GM10248 (cell line): ENCODE measurements at regions of chr13 and their contacts with region 1.

Region 1: DNA sequence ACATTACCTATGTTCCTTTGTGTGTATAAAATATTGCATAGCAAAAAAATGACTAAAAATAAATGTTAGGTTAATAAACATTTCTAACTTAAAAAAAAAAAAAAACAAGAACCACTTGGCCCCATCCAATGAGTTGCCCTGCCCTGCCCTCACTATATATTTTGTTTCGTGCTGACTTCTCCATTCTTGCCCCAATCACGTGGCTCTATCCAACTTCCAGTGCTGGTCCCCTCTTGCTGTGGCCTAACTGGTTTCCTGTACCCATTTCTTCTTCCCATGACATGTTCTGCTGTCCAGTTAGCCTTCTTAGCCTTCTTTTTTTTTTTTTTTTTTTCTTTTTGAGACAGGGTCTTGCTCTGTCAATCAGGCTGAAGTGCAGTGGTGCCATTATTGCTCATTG is 151.6 kb downstream of the FOXO1 start:
- DNase-seq: no peak
- CTCF ChIP-seq: no peak

Region 2: DNA sequence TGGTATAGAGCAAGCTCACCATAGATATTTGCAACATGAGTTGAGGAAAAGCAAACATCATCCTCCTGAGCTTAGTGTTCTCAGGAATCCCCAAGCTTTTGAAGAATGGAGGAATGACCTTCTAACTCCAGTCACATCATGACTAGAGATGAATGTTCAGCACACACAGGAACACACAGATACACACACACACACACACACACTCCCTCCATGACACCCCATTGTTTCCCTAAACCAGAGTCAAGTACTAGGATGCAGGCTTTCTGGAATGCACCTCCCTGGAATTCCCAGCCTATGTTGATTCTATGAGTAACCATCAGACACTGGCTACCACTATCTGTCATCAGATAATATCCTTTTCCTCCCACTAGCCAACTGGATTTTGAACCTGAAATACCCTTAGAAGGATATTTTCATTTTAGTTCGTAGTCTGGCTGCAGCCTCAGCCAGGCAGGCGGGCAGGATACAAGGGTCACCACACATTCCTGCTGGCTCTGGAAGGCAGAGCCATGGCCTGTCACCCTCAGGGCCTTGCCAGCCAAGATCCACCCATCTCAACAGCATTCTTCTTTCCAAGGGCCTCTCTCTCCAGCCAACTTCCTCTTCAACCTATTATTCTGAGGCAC is 10.7 kb before region 1 on chr13:
- CTCF ChIA-PET with region 1: interaction called, 18 read pairs
- POLR2A ChIA-PET with region 1: no interaction called
- DNase-seq: no peak
- CTCF ChIP-seq: no peak

Region 3: GRCh38 chr13:40536443-40537113 is 21.8 kb after region 1 on chr13:
- CTCF ChIA-PET with region 1: no interaction called
- POLR2A ChIA-PET with region 1: no interaction called
- DNase-seq: no peak
- CTCF ChIP-seq: no peak